ENCODE measurements at regions of chr5 and their contacts with region 1.

Region 1: GRCh38 chr5:160605266-160605665 is 183.6 kb downstream of the PTTG1 start:
- DNase-seq: no peak
- ATAC-seq: no peak
- H3K4me3 Mint-ChIP-seq: no peak overlapping the region
- H3K27ac Mint-ChIP-seq: no peak overlapping the region
- H3K4me1 Mint-ChIP-seq: no peaks in the 10 kb centered on the region
- H3K27me3 Mint-ChIP-seq: no peaks in the 10 kb centered on the region

Region 2: DNA sequence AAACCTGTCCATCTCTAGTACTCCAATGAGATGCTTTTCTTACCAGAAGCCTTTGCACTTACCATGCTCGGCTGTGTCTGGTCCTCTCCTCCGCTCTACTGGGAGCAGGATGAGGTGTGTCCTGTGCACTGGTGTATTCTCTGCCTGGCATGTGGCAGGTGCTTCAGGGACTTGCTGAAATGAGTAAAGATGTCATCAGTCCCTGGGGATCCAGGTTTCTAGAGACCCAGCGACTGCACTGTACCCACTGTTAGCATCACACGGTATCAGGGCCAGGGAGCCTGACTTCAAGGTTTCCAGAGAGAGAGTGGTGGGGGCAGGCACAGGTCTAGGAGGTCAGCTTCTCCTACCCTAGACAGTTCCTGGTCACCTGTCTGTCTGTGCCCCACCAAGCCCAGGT is 173.1 kb before region 1 on chr5:
- CTCF ChIA-PET with region 1: no interaction called
- POLR2A ChIA-PET with region 1: no interaction called
- intact Hi-C with region 1: no loop called
- DNase-seq: no peak
- ATAC-seq: no peak
- H3K4me3 Mint-ChIP-seq: no peak overlapping the region
- H3K27ac Mint-ChIP-seq: no peak overlapping the region
- H3K4me1 Mint-ChIP-seq: peaks cover 9% of the 10 kb centered on the region
- H3K27me3 Mint-ChIP-seq: peaks cover 4% of the 10 kb centered on the region

Region 3: DNA sequence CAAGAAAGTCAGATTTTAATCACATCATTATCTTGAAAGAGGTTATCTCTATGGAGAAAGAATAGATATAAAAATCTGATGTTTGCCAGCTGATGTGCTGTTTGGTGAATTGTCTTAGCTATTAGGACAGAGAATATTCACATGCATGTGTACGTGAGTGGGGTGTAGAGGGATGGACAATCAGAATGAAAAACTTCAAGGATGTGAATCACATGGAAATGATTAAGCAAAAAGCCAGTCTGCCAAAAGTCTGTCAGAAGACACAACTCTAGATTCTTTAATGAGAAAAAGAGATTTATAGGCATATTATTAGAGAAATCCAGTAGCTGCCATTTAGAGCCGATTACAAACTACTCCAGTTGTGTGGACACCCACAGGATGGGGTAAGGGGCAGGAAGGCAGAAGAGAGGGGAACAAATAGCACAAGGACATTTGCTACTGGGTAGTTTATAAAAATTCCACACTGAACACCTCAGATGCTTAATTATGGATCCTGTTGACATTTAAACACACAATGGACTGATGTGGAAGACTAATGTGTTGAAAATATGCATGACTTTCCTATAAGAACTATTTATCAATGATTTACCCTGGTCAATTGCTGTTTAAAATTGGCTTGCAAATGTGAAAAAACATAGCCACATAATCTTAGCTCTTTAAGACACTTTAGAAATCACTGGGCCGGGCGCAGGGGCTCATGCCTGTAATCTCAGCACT is 56.2 kb before region 1 on chr5:
- CTCF ChIA-PET with region 1: no interaction called
- POLR2A ChIA-PET with region 1: interaction called, 12 read pairs
- intact Hi-C with region 1: no loop called
- DNase-seq: no peak
- ATAC-seq: no peak
- H3K4me3 Mint-ChIP-seq: no peak overlapping the region
- H3K27ac Mint-ChIP-seq: no peak overlapping the region
- H3K4me1 Mint-ChIP-seq: peaks cover 22% of the 10 kb centered on the region
- H3K27me3 Mint-ChIP-seq: peaks cover 9% of the 10 kb centered on the region

Region 4: GRCh38 chr5:161190086-161190485 is 584.8 kb after region 1 on chr5:
- CTCF ChIA-PET with region 1: no interaction called
- POLR2A ChIA-PET with region 1: no interaction called
- intact Hi-C with region 1: no loop called
- DNase-seq: no peak
- ATAC-seq: no peak
- H3K4me3 Mint-ChIP-seq: no peak overlapping the region
- H3K27ac Mint-ChIP-seq: no peak overlapping the region
- H3K4me1 Mint-ChIP-seq: no peaks in the 10 kb centered on the region
- H3K27me3 Mint-ChIP-seq: no peaks in the 10 kb centered on the region

Measured in activated CD4-positive, alpha-beta T cell treated with anti-CD3 and anti-CD28 coated beads for 36 hours (primary cell).